ENCODE measurements at regions of chr3 and their contacts with region 1.

Region 1: DNA sequence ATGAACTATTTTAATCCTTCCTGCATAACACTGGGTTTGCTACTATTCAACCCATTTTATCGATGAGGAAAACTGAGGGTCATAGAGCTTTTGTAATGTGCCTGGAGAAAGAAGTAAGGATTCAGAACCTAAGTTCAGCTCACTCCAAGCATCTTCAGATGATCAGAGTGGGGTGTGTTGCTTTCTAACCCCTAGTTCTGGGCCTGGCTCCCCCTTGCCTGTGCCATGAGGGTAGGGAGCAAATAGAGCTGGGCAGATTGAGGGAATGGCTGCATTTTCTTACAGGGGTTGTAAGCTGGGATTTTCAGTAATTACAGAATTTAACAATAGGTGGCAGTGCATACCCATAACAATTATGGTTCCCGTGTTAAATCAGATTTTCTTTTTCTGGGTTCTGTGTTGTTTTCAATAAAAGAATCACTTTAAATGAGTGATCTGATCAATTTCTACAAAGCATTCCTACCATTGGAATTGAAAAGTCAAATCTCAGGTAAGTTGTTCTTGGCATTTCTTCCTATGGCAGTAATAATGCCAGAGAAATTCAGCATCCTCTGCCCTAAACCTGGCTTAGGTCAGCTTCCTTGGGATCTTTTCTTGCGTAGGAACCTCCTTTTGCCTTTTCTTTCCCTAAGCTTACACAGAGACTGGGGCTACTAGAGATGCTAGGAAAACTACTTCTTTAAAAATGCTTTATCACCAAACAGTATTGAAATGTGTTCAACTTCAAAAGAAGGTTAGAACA is 103.8 kb upstream of the IL12A start:
- DNase-seq: no peak
- ATAC-seq: peak; percentile 57
- H3K4me3 Mint-ChIP-seq: no peak overlapping the region
- H3K27ac Mint-ChIP-seq: no peak overlapping the region
- H3K4me1 Mint-ChIP-seq: no peaks in the 10 kb centered on the region
- H3K27me3 Mint-ChIP-seq: no peaks in the 10 kb centered on the region
- CTCF ChIP-seq: no peak

Region 2: GRCh38 chr3:159828542-159828943 is 56.3 kb before region 1 on chr3:
- CTCF ChIA-PET with region 1: interaction called, 3 read pairs
- POLR2A ChIA-PET with region 1: no interaction called
- intact Hi-C with region 1: loop called (anchors 5 kb)
- DNase-seq: no peak
- ATAC-seq: peak; percentile 31
- H3K4me3 Mint-ChIP-seq: no peak overlapping the region
- H3K27ac Mint-ChIP-seq: no peak overlapping the region
- H3K4me1 Mint-ChIP-seq: peaks cover 4% of the 10 kb centered on the region
- H3K27me3 Mint-ChIP-seq: no peaks in the 10 kb centered on the region
- CTCF ChIP-seq: no peak

Region 3: DNA sequence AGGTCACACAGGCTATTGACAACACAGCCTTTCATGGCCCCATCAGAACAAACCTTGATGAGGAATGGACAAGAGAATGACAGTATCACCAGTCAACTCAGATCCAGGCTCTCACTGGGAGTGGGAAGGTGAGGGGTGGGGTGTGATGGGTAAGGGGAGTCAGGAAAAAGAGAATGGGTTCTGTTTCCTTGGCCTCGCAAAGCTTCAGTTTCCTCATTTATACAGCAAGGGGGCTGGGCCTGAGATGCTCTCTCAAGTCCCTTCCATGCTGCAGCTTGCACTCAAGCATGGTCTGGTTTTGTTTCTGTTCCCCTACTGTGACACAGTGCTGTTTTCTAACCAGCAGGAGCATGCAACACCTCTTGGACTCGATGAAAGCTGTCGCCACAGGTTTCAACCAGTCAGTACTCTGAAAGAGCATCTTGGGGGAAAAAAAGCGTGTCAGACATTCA is 38.1 kb after region 1 on chr3:
- CTCF ChIA-PET with region 1: interaction called, 5 read pairs
- POLR2A ChIA-PET with region 1: interaction called, 3 read pairs
- intact Hi-C with region 1: loop called (anchors 2 kb)
- DNase-seq: peak; percentile 29
- ATAC-seq: peak; percentile 98
- H3K4me3 Mint-ChIP-seq: peak overlapping the region; percentile 42
- H3K27ac Mint-ChIP-seq: peak overlapping the region; percentile 59
- H3K4me1 Mint-ChIP-seq: peaks cover 38% of the 10 kb centered on the region
- H3K27me3 Mint-ChIP-seq: no peaks in the 10 kb centered on the region
- CTCF ChIP-seq: no peak

Region 4: DNA sequence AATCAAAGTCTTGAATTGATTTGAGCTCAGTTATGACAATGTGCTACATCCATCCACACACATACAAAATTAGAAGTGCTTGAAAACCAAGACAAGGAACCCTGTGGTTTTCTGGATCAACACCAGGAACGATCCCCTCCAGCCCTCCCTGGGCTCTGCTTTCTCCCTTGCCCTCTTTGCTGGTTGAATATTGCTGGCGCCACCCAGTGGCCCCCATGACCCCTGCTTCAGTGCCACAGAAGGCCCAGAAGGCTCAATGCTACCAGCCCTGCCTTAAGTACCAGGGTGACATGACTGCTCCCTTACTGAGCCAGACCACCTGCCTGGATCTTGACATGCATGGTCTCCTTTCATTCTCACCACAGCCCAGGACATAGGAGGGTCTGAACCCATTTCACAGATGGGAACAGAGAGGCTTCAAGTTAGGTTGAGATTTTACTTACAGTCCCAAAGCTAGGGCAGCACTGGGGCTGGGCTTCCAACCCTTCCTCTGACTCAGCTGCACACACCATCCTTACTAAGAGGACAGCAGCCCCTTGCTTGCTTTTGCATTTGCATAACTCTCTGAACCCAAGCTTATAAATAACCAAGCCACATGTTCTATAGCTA is 118.8 kb after region 1 on chr3:
- CTCF ChIA-PET with region 1: interaction called, 290 read pairs
- POLR2A ChIA-PET with region 1: interaction called, 7 read pairs
- intact Hi-C with region 1: loop called (anchors 1 kb)
- DNase-seq: peak; percentile 38
- ATAC-seq: peak; percentile 92
- H3K4me3 Mint-ChIP-seq: no peak overlapping the region
- H3K27ac Mint-ChIP-seq: no peak overlapping the region
- H3K4me1 Mint-ChIP-seq: peaks cover 10% of the 10 kb centered on the region
- H3K27me3 Mint-ChIP-seq: no peaks in the 10 kb centered on the region
- CTCF ChIP-seq: no peak

Region 5: GRCh38 chr3:160225176-160226025 is 340.6 kb after region 1 on chr3 and contains the start of gene C3orf80:
- CTCF ChIA-PET with region 1: interaction called, 3 read pairs
- POLR2A ChIA-PET with region 1: no interaction called
- intact Hi-C with region 1: loop called (anchors 1 kb)
- DNase-seq: peak; percentile 41
- ATAC-seq: peak; percentile 78
- H3K4me3 Mint-ChIP-seq: peak within 1 kb of the TSS; percentile 71
- H3K27ac Mint-ChIP-seq: no peak within 1 kb of the TSS
- H3K4me1 Mint-ChIP-seq: peaks cover 21% of the 10 kb centered on the region
- H3K27me3 Mint-ChIP-seq: peaks cover 37% of the 10 kb centered on the region
- CTCF ChIP-seq: no peak
- total RNA-seq, gene C3orf80: not detected in 2 replicates

Region 6: DNA sequence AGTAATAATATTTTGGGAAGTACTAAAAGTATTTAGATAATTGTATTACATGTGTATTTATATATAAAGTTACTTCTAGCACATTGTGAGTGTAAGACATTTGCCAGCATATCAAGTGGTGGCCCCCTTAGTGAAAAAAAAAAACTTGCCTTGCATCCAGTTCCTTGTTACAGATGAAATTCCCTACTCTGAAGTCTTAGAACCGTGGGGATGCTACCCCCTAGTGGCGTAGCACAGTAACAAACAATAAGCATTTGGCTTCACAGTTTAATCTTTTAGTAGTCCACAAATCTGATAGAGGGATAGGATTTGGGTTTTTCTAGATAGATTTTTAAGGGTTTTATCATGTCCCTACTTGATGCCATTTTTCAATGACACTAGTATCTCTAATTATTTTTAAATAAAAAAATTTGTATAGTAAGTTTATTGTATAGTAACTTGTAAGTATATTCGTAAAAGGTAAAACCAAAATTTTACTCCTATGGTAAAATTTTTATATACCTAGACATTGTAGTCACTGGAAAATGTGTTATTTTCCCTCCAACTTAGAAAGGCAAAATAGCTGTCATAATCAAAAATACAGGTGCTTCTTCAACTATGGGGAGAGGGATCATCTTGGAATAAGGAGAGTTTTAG is 528.9 kb after region 1 on chr3:
- CTCF ChIA-PET with region 1: interaction called, 73 read pairs
- POLR2A ChIA-PET with region 1: no interaction called
- intact Hi-C with region 1: loop called (anchors 1 kb)
- DNase-seq: peak; percentile 19
- ATAC-seq: peak; percentile 90
- H3K4me3 Mint-ChIP-seq: no peak overlapping the region
- H3K27ac Mint-ChIP-seq: no peak overlapping the region
- H3K4me1 Mint-ChIP-seq: peaks cover 1% of the 10 kb centered on the region
- H3K27me3 Mint-ChIP-seq: no peaks in the 10 kb centered on the region
- CTCF ChIP-seq: peak; percentile 98

Region 7: DNA sequence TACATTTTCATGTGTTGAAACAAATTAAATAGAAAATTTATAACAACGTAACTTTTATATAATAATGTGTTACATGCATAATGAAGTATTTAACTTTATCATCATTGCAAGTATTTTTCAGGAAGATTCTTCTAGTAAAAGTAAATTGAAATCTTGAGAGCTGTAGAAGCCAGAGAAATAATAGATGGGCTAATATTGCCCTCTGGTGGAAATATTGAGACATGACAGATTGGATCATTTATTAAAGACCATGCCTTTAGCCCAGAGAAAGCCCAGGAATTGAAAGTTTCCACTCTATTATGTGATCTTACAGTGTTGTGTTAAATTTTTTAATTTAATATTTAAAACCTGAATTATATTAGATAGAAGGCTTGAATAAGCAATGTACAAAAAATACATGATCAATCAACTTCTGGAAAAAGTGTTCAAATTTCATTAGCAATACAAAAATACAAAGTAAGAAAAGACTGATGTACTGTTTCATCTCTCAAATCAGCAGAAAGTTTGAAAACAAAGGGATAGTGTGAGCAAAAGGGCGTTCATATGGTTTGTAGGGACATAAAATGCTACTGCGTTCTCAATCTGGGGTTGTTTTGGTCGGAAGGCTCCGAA is 1539.2 kb after region 1 on chr3:
- CTCF ChIA-PET with region 1: no interaction called
- POLR2A ChIA-PET with region 1: no interaction called
- intact Hi-C with region 1: loop called (anchors 5 kb)
- DNase-seq: no peak
- ATAC-seq: no peak
- H3K4me3 Mint-ChIP-seq: no peak overlapping the region
- H3K27ac Mint-ChIP-seq: no peak overlapping the region
- H3K4me1 Mint-ChIP-seq: no peaks in the 10 kb centered on the region
- H3K27me3 Mint-ChIP-seq: no peaks in the 10 kb centered on the region
- CTCF ChIP-seq: peak; percentile 42